Vagina (tissue), 2 donors: ENCODE measurements at regions of chr12 and their contacts with region 1.

Region 1: DNA sequence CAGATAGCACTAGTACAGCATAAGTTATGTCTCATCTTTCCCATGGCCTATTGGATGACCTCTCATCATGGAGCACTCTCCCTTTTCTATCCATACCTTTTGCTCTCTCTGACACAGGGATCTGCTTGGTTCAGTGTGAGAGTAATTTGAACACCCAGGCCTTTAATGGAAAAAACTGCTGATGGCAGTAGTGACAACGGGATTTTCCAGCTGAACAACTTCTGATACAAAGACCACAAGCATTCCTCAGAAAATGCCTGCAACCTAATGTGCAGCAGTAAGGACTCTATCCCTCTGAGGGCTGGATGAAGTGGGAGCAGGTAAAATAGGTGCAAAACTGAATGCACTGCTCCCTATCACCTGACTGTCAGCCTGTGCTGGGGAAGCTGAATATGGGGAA is 51.0 kb downstream of the KANSL2 start:
- DNase-seq: no peak
- H3K4me3 ChIP-seq: no peak overlapping the region
- H3K27ac ChIP-seq: no peak overlapping the region
- H3K4me1 ChIP-seq: no peaks in the 10 kb centered on the region
- H3K27me3 ChIP-seq: no peaks in the 10 kb centered on the region
- CTCF ChIP-seq: no peak
- POLR2A ChIP-seq: no peak

Region 2: DNA sequence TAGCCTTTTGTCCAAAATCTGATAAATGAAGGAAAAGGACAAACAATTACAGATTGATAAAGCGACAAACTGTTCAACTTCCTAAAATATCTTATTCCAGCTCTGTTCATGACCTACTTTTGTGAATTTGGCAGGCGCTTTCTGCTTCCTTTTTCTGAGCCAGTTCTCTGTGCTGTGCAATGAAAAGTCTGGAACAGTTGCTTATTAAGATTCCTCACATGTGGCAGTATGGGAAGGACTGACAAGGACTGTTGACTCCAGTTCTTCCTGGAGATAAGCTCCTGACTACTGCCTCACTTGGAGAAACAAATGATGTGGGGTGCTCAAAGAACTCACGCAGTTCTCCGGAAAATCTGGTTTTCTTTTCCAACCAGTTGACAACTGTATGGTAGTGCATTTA is 217.0 kb before region 1 on chr12:
- intact Hi-C with region 1: loop called (anchors 10 kb)
- DNase-seq: no peak
- H3K4me3 ChIP-seq: no peak overlapping the region
- H3K27ac ChIP-seq: no peak overlapping the region
- H3K4me1 ChIP-seq: peaks cover 16% of the 10 kb centered on the region
- H3K27me3 ChIP-seq: no peaks in the 10 kb centered on the region
- CTCF ChIP-seq: no peak
- POLR2A ChIP-seq: no peak